ENCODE measurements at regions of chr4 and their contacts with region 1.

Region 1: DNA sequence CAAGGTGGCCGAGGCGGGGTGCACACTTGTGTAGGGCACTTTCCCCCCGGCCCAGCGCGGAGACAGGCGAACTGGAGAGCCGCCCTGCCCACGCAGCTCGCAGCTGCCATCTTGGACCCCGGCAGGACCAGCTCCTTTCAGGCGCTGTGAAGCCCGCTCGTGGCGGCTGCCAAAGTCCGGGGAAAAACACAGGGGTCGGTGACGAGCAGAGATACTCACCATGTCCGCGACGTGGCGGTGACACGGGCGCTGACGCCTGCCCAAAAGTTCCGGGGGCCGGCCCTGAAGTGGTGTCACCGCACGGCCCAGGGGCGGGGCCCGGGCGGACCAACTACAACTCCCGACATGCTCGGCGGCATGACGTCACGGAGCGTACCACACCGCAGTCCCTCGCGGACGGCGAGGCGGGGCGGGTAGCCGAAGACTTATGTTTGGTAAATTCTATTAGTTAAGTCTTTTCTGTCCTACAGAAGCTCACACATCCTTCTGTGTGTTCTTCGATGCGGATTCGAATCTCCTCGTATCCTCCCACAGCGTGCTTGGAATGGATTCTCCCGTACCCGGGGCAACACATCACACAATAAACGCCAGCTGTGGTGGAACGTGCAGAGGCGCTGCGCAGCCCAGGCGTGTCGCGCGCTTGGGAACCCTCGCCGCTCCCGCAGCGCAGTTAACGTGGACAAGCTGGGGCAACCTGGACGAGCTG is at the start of gene UFSP2:
- DNase-seq: peak; percentile 93
- ATAC-seq: peak; percentile 91
- H3K4me3 Mint-ChIP-seq: peak within 1 kb of the TSS; percentile 83
- H3K27ac Mint-ChIP-seq: peak within 1 kb of the TSS; percentile 90
- H3K4me1 Mint-ChIP-seq: peaks cover 30% of the 10 kb centered on the region
- H3K27me3 Mint-ChIP-seq: peaks cover 2% of the 10 kb centered on the region
- total RNA-seq, gene UFSP2: 27.3 to 40.3 TPM

Region 2: GRCh38 chr4:185142912-185143595 is 282.7 kb before region 1 on chr4 and contains the start of gene SLC25A4:
- CTCF ChIA-PET with region 1: no interaction called
- POLR2A ChIA-PET with region 1: no interaction called
- intact Hi-C with region 1: loop called in 1 of 2 experiments (anchors 1 kb)
- DNase-seq: peak; percentile 91
- ATAC-seq: peak; percentile 95
- H3K4me3 Mint-ChIP-seq: peak within 1 kb of the TSS; percentile 74
- H3K27ac Mint-ChIP-seq: peak within 1 kb of the TSS; percentile 70
- H3K4me1 Mint-ChIP-seq: peaks cover 10% of the 10 kb centered on the region
- H3K27me3 Mint-ChIP-seq: peaks cover 33% of the 10 kb centered on the region
- total RNA-seq, gene SLC25A4: 4.2 to 5.0 TPM

Region 3: GRCh38 chr4:185203486-185204237 is 222.1 kb before region 1 on chr4 and contains the start of gene CFAP97:
- CTCF ChIA-PET with region 1: no interaction called
- POLR2A ChIA-PET with region 1: no interaction called
- intact Hi-C with region 1: loop called (anchors 1 to 2 kb)
- DNase-seq: peak; percentile 82
- ATAC-seq: peak; percentile 85
- H3K4me3 Mint-ChIP-seq: peak within 1 kb of the TSS; percentile 94
- H3K27ac Mint-ChIP-seq: peak within 1 kb of the TSS; percentile 97
- H3K4me1 Mint-ChIP-seq: peaks cover 41% of the 10 kb centered on the region
- H3K27me3 Mint-ChIP-seq: no peaks in the 10 kb centered on the region
- total RNA-seq, gene CFAP97: 54.6 to 81.8 TPM

Region 4: DNA sequence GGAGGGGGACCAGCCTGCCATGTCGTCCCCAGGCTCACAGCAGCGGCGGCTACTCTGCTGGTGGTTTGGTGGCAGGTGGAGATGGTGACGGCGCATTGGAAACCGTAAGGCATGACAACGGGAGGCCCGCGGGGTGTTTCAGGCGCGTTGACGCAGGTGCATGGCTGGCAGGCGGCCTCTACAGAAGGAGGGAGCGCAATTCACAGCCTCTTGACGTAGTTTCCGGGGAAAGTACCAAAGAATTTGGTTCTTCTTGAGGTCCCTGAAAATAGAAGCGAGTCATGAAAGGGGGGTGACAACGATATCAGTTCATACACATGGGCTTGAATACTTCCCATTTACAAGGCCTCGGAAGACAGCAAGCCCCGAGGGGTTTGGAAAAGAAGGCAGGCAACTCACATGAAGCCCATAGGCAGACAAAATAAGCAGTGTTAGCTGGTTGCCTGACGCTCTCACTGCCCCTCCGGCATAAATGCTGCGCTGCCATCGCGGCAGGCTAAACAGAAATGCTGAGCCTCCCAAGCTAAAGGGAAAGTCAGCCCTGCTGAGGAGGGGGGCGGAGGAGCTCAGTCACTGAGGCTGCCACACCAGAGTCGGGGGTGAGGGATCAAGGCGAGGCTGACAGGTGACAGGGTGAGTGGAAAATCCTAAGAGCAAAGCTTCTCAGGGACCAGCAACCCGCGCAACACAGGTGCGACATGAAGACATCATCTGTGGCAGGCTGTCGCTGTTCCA is 161.8 kb after region 1 on chr4:
- CTCF ChIA-PET with region 1: no interaction called
- POLR2A ChIA-PET with region 1: no interaction called
- intact Hi-C with region 1: loop called in 1 of 2 experiments (anchors 2 kb)
- DNase-seq: peak; percentile 90
- ATAC-seq: peak; percentile 99
- H3K4me3 Mint-ChIP-seq: peak overlapping the region; percentile 40
- H3K27ac Mint-ChIP-seq: peak overlapping the region; percentile 63
- H3K4me1 Mint-ChIP-seq: peaks cover 18% of the 10 kb centered on the region
- H3K27me3 Mint-ChIP-seq: peaks cover 47% of the 10 kb centered on the region

Region 5: GRCh38 chr4:185608185-185608584 is 182.4 kb after region 1 on chr4:
- CTCF ChIA-PET with region 1: no interaction called
- POLR2A ChIA-PET with region 1: no interaction called
- intact Hi-C with region 1: no loop called
- DNase-seq: no peak
- ATAC-seq: no peak
- H3K4me3 Mint-ChIP-seq: no peak overlapping the region
- H3K27ac Mint-ChIP-seq: no peak overlapping the region
- H3K4me1 Mint-ChIP-seq: peaks cover 3% of the 10 kb centered on the region
- H3K27me3 Mint-ChIP-seq: peaks cover 3% of the 10 kb centered on the region

Region 6: GRCh38 chr4:186191200-186192065 is 765.6 kb after region 1 on chr4 and contains the start of gene CYP4V2:
- CTCF ChIA-PET with region 1: no interaction called
- POLR2A ChIA-PET with region 1: no interaction called
- intact Hi-C with region 1: loop called in 1 of 2 experiments (anchors 2 kb)
- DNase-seq: peak; percentile 93
- ATAC-seq: peak; percentile 84
- H3K4me3 Mint-ChIP-seq: peak within 1 kb of the TSS; percentile 85
- H3K27ac Mint-ChIP-seq: peak within 1 kb of the TSS; percentile 94
- H3K4me1 Mint-ChIP-seq: peaks cover 37% of the 10 kb centered on the region
- H3K27me3 Mint-ChIP-seq: no peaks in the 10 kb centered on the region
- total RNA-seq, gene CYP4V2: 4.1 to 4.5 TPM

Measured in activated CD4-positive, alpha-beta T cell treated with anti-CD3 and anti-CD28 coated beads for 36 hours (primary cell).